CD8-positive, alpha-beta T cell (primary cell): ENCODE measurements at regions of chr14 and their contacts with region 1.

Region 1: DNA sequence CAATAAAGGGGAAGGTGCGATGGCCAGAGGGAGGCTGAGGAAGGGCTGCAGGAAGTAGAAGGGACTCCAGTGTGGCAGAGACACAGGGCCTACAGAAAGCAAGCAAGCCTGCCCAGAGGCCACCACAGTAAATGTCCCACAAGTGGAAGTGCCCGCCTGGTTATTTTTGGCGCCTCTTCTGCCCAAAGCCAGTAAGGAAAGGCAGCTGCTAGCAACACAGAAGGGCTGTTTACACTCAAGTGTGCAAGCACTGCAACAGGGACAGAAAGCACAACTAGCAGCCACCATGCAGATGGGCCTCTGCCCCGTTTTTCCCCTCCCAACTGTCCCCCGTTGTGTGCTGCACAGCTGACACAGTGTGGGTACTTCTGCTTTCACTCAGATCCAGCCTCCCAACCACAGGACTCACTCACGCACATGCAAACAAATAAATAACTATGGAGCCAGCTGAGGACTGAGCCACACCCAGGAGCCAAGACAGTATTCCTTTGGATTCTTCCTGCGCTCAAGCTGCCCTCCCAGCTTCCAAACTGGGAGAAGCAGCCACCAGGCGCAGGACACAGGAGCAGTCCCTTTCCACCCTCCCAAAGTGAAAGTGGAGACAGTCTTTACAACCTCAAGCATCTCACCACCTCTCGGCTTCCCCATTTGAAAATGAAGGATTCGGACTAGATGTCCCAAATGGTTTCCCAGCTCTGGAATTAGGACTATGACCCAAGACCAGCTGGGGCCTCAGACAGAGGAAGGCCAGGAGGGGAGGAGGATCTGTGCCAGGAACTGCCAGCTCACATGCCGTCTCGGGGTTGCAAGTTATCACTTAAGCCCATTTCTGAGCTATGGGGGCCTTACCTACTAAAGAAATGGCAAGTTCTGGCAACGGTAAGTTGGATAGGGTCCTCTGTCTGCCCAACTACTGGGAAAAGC is 40.0 kb upstream of the PNMA1 start:
- DNase-seq: peak in 3 of 9 experiments; percentile 43 to 74 (median 61)
- ATAC-seq: peak; percentile 17
- H3K4me3 ChIP-seq: peak overlapping the region; percentile 38 to 55
- H3K4me3 Mint-ChIP-seq: peak overlapping the region; percentile 85
- H3K27ac ChIP-seq: peak overlapping the region; percentile 67 to 85
- H3K27ac Mint-ChIP-seq: peak overlapping the region; percentile 97
- H3K4me1 ChIP-seq: peaks cover 94% of the 10 kb centered on the region
- H3K4me1 Mint-ChIP-seq: peaks cover 92% of the 10 kb centered on the region
- H3K27me3 ChIP-seq: no peaks in the 10 kb centered on the region
- H3K27me3 Mint-ChIP-seq: no peaks in the 10 kb centered on the region
- CTCF ChIP-seq: no peak

Region 2: GRCh38 chr14:73741386-73741875 is 12.8 kb before region 1 on chr14:
- CTCF ChIA-PET with region 1: interaction called, 146 read pairs
- POLR2A ChIA-PET with region 1: interaction called, 102 read pairs
- intact Hi-C with region 1: loop called in 1 of 2 experiments (anchors 1 kb)
- DNase-seq: peak in 7 of 9 experiments; percentile 61 to 86 (median 75)
- ATAC-seq: peak; percentile 79
- H3K4me3 ChIP-seq: peak overlapping the region; percentile 25 to 42
- H3K4me3 Mint-ChIP-seq: peak overlapping the region; percentile 80
- H3K27ac ChIP-seq: peak overlapping the region; percentile 29 to 83
- H3K27ac Mint-ChIP-seq: peak overlapping the region; percentile 94
- H3K4me1 ChIP-seq: peaks cover 82% of the 10 kb centered on the region
- H3K4me1 Mint-ChIP-seq: peaks cover 74% of the 10 kb centered on the region
- H3K27me3 ChIP-seq: no peaks in the 10 kb centered on the region
- H3K27me3 Mint-ChIP-seq: no peaks in the 10 kb centered on the region
- CTCF ChIP-seq: no peak

Region 3: DNA sequence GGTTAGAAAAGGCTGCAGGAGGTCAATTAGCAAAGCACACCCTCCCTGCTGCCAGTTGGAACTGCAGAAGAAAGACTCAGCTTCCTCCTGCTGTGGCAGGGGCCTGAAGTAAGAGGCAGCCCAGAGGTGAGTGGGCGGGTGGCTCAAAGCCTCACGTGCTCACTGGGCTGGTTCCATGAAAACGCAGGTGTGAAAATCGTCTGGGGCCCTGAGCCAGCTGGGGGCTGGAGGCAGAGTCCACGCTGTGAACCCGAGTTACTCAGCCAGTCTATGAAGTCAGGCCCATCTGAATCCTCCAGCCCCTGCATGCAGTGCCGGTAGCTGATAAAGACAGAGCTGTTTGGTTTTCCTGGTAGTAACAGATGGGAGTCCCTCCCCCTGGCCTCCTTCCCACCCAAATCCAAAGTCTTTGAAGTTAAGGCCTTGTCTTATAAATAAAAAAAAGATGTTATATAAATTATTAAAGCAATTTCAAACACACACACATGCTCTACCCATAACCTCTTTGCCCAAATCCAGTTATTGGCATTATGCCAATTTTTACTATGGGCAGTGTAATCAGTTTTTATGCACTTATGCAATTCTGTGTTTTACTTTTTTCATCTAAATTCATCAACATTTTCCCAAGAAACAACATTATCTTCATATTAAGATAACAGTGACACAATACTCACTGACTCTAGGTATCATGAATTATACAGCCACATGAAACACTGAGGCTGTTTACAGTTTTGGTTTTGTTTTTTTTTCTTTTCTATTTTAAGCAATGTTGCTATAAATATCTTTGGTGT is 17.8 kb after region 1 on chr14:
- CTCF ChIA-PET with region 1: interaction called, 15 read pairs
- POLR2A ChIA-PET with region 1: interaction called, 58 read pairs
- intact Hi-C with region 1: loop called in 1 of 2 experiments (anchors 2 kb)
- DNase-seq: peak in 7 of 9 experiments; percentile 45 to 86 (median 74)
- ATAC-seq: peak; percentile 75
- H3K4me3 ChIP-seq: peak overlapping the region; percentile 1 to 38
- H3K4me3 Mint-ChIP-seq: peak overlapping the region; percentile 66
- H3K27ac ChIP-seq: peak overlapping the region; percentile 41 to 77
- H3K27ac Mint-ChIP-seq: peak overlapping the region; percentile 94
- H3K4me1 ChIP-seq: peaks cover 70% of the 10 kb centered on the region
- H3K4me1 Mint-ChIP-seq: peaks cover 74% of the 10 kb centered on the region
- H3K27me3 ChIP-seq: no peaks in the 10 kb centered on the region
- H3K27me3 Mint-ChIP-seq: no peaks in the 10 kb centered on the region
- CTCF ChIP-seq: no peak

Region 4: GRCh38 chr14:73777401-73777800 is 23.2 kb after region 1 on chr14:
- CTCF ChIA-PET with region 1: interaction called, 15 read pairs
- POLR2A ChIA-PET with region 1: interaction called, 58 read pairs
- intact Hi-C with region 1: no loop called
- DNase-seq: peak in 2 of 9 experiments; percentile 47 to 58
- ATAC-seq: peak; percentile 73
- H3K4me3 ChIP-seq: no peak overlapping the region
- H3K4me3 Mint-ChIP-seq: no peak overlapping the region
- H3K27ac ChIP-seq: no peak overlapping the region
- H3K27ac Mint-ChIP-seq: peak overlapping the region; percentile 89
- H3K4me1 ChIP-seq: peaks cover 55% of the 10 kb centered on the region
- H3K4me1 Mint-ChIP-seq: peaks cover 67% of the 10 kb centered on the region
- H3K27me3 ChIP-seq: no peaks in the 10 kb centered on the region
- H3K27me3 Mint-ChIP-seq: no peaks in the 10 kb centered on the region
- CTCF ChIP-seq: no peak

Region 5: GRCh38 chr14:73825551-73826188 is 71.4 kb after region 1 on chr14:
- CTCF ChIA-PET with region 1: interaction called, 10 read pairs
- POLR2A ChIA-PET with region 1: no interaction called
- intact Hi-C with region 1: loop called in 1 of 2 experiments (anchors 1 kb)
- DNase-seq: peak; percentile 48 to 86 (median 81)
- ATAC-seq: peak; percentile 97
- H3K4me3 ChIP-seq: no peak overlapping the region
- H3K4me3 Mint-ChIP-seq: no peak overlapping the region
- H3K27ac ChIP-seq: no peak overlapping the region
- H3K27ac Mint-ChIP-seq: no peak overlapping the region
- H3K4me1 ChIP-seq: no peaks in the 10 kb centered on the region
- H3K4me1 Mint-ChIP-seq: peaks cover 10% of the 10 kb centered on the region
- H3K27me3 ChIP-seq: no peaks in the 10 kb centered on the region
- H3K27me3 Mint-ChIP-seq: no peaks in the 10 kb centered on the region
- CTCF ChIP-seq: peak; percentile 86